A673 (cell line): ENCODE measurements at regions of chr13 and their contacts with region 1.

Region 1: GRCh38 chr13:49792550-49793324 is at the start of gene KPNA3:
- DNase-seq: peak; percentile 99
- H3K4me3 ChIP-seq: peak within 1 kb of the TSS; percentile 93
- H3K27ac ChIP-seq: peak within 1 kb of the TSS; percentile 95
- H3K4me1 ChIP-seq: peaks cover 9% of the 10 kb centered on the region
- H3K27me3 ChIP-seq: no peaks in the 10 kb centered on the region
- CTCF ChIP-seq: no peak
- total RNA-seq, gene KPNA3: 55.9 and 62.0 TPM in 2 replicates

Region 2: GRCh38 chr13:50055454-50055853 is 262.7 kb after region 1 on chr13:
- CTCF ChIA-PET with region 1: no interaction called
- POLR2A ChIA-PET with region 1: no interaction called
- intact Hi-C with region 1: no loop called
- DNase-seq: no peak
- H3K4me3 ChIP-seq: no peak overlapping the region
- H3K27ac ChIP-seq: no peak overlapping the region
- H3K4me1 ChIP-seq: no peaks in the 10 kb centered on the region
- H3K27me3 ChIP-seq: no peaks in the 10 kb centered on the region
- CTCF ChIP-seq: no peak

Region 3: DNA sequence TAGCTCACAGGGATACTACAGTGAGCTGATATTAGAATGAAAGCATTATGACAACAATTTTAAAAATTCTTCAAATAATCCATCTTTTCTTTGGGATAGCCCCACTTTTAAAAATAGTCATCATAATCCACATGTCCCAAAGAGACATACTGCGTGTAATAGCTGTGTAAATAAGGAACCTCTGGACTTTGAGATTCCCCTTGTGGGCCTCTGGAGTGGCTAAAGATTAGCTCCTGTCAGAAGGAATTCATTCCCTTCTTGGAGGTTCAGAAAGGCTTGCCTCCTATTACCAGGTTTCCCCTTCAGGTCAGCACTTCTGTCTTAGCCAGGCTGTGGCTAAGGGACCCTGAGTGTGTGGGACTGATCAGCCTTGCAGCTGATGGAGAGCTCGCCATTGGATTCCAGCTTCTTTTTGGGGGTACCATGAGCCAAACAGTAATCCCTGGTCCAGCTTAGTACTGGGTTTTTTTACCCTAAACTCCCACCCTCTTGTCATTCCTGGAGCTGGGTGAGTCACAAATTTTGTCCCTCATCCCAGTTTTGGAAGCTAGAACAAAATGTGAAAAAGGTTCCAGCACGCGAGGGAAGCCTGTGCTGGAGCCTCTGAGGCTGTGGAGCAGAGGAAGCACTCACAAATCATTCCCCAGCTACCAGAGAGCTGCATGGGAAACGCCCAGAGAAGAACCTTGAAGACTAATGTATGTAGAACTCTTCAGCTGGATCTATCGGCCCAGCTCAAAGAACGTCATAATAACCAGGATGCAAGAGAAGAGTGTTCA is 1213.5 kb after region 1 on chr13:
- CTCF ChIA-PET with region 1: no interaction called
- POLR2A ChIA-PET with region 1: interaction called, 18 read pairs
- intact Hi-C with region 1: no loop called
- DNase-seq: no peak
- H3K4me3 ChIP-seq: no peak overlapping the region
- H3K27ac ChIP-seq: no peak overlapping the region
- H3K4me1 ChIP-seq: peaks cover 10% of the 10 kb centered on the region
- H3K27me3 ChIP-seq: no peaks in the 10 kb centered on the region
- CTCF ChIP-seq: no peak